ENCODE measurements at regions of chr1 and their contacts with region 1.

Region 1: DNA sequence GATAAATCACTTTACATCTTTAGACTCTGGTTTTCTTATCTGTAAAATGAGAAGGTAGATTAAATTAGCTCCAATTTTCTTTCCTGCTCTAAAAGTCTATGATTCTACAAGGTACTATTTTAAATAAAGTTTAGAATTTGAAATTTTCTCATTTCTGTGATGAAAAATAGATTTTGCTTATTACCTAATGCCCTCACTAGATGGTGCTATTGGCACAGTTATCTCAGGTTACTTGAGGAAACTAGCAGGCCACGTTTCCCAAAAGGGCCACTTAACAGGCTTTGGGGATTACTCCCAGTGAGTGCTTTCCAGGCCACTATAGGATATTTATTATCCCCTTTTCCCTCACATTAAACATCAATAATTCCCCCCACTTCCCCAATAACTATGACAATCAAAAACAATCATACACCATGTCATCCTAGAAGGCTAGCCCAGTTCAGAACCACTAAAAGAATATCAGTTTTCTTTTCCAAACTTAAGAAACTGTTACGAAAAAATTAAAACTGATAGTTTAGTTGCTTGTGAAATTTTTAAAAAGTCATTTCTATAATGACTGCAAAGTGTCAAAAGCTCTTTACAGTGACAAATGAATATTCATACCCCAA is 30.6 kb downstream of the OMA1 start:
- DNase-seq: no peak
- ATAC-seq: peak; percentile 83

Region 2: DNA sequence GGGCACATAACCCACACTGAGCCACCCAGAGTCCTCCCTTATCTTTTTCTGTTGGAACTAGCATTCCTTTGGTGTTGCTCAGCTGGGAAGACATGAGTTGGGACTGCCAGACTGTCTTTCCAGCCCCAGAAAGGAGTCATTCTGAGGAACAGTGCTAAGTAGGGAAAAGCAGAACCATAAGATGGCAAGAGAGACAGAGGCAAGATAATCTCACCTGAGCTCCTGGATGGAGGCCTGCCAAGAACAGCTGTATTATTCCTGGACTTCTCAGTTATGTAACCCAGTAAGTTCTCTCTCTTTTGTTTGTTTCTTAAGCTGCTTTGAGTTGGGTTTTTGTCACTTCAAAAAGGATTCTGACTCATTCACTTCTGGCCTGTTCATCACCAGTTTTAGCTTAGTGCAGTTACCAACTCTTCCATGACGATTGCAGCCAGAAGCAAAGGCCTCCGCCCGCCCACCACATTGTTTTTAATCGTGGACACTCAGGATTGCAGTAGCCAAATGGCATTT is 103.8 kb before region 1 on chr1:
- intact Hi-C with region 1: no loop called
- DNase-seq: no peak
- ATAC-seq: no peak

Region 3: DNA sequence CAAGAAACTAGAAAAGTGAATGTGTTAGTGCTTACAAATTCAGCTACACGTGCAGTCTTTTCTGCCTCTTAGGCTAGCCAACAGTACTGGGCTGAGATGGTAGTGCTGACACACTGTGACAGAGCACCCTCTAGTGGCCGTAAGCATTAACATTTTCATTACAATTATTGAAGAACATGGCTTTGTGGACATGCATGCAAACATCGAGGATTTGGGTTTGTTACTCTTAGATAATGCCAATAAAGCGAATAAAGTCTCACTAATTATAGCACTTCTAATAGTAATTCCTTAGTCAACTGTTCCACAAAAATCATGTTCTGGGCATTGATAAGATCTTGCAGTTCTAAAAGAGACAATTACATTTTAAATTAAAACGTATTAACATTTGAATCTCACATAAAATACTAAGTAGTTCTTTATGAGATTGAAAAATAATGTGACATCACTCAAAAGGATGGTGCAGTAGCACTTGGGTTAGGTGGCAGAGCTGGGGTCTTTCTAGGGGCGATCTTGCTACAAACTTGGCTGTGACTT is 136.8 kb after region 1 on chr1:
- intact Hi-C with region 1: loop called (anchors 5 kb)
- DNase-seq: no peak
- ATAC-seq: peak; percentile 88

Measured in Right ventricle myocardium superior (tissue), 1 donor.